ENCODE measurements at regions of chr13 and their contacts with region 1.

Region 1: DNA sequence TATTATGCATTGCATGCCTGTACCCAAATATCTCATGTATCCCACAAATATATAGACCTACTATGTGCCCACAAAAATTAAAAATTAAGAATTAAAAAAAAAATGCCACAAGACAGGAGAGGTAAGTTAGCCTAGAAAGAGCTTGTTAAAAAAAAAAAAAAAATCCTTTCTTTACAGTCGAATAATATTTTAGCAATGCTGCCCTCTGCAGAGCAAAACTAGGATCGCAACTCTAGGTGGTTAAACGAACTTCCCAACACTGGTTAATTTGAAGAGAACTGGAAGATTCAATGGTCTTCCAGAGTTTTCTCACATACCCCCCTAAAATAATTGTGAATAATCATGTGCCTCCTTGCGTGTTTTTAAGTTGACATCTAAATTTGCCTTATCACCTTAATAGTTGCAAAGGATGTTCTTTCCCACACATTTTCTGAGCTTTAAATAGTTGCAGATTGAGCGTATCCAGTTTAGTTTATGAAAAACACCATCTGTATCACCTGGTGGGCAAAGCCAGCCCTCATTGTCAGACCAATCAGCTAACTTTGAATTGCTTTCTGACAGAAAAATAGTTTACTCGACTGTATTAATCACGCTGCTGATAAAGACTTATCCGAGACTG is 47.4 kb upstream of the RCBTB2 start:
- DNase-seq: peak; percentile 80
- ATAC-seq: peak; percentile 19; the same call in 1 of the 2 replicates
- H3K4me3 ChIP-seq: no peak overlapping the region
- H3K27ac ChIP-seq: no peak overlapping the region
- H3K4me1 ChIP-seq: peaks cover 19% of the 10 kb centered on the region
- H3K27me3 ChIP-seq: no peaks in the 10 kb centered on the region
- CTCF ChIP-seq: peak; percentile 71

Region 2: GRCh38 chr13:48126944-48127830 is 453.1 kb before region 1 on chr13:
- CTCF ChIA-PET with region 1: no interaction called
- POLR2A ChIA-PET with region 1: no interaction called
- intact Hi-C with region 1: loop called (anchors 2 kb)
- DNase-seq: peak; percentile 66
- ATAC-seq: peak; percentile 73
- H3K4me3 ChIP-seq: no peak overlapping the region
- H3K27ac ChIP-seq: no peak overlapping the region
- H3K4me1 ChIP-seq: no peaks in the 10 kb centered on the region
- H3K27me3 ChIP-seq: no peaks in the 10 kb centered on the region
- CTCF ChIP-seq: peak; percentile 68

Region 3: GRCh38 chr13:48233046-48233907 is 347.0 kb before region 1 on chr13 and contains the start of gene ITM2B:
- CTCF ChIA-PET with region 1: no interaction called
- POLR2A ChIA-PET with region 1: no interaction called
- intact Hi-C with region 1: loop called (anchors 10 kb)
- DNase-seq: peak; percentile 52
- ATAC-seq: peak; percentile 84
- H3K4me3 ChIP-seq: peak within 1 kb of the TSS; percentile 88
- H3K27ac ChIP-seq: peak within 1 kb of the TSS; percentile 32; the same call in 1 of the 2 replicates
- H3K4me1 ChIP-seq: peaks cover 32% of the 10 kb centered on the region
- H3K27me3 ChIP-seq: no peaks in the 10 kb centered on the region
- CTCF ChIP-seq: peak; percentile 45; the same call in 1 of the 2 replicates
- total RNA-seq, gene ITM2B: 74.6 and 105 TPM in 2 replicates

Region 4: GRCh38 chr13:48334534-48335127 is 245.7 kb before region 1 on chr13:
- CTCF ChIA-PET with region 1: interaction called, 31 read pairs
- POLR2A ChIA-PET with region 1: no interaction called
- intact Hi-C with region 1: loop called (anchors 1 kb)
- DNase-seq: peak; percentile 49
- ATAC-seq: peak; percentile 74
- H3K4me3 ChIP-seq: no peak overlapping the region
- H3K27ac ChIP-seq: peak overlapping the region; percentile 53
- H3K4me1 ChIP-seq: peaks cover 18% of the 10 kb centered on the region
- H3K27me3 ChIP-seq: no peaks in the 10 kb centered on the region
- CTCF ChIP-seq: peak; percentile 87

Region 5: DNA sequence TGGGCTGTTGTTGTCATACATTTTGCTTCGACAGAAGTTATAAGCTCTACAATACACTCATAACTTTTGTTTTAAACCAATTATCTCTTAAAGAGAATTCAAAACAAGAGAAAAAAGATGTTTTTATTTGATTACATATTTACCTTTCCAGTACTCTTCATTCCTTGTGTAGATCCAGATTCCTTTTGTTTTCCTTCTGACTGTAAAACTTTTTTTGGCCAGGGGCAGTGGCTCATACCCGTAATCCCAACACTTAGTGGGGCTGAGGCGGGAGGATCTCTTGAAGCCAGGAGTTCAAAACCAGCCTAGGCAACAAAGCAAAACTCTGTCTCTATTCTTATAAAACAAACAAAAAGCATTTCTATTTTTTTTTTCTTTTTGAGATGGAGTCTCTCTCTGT is 189.0 kb before region 1 on chr13:
- CTCF ChIA-PET with region 1: interaction called, 10 read pairs
- POLR2A ChIA-PET with region 1: no interaction called
- intact Hi-C with region 1: no loop called
- DNase-seq: no peak
- ATAC-seq: no peak
- H3K4me3 ChIP-seq: no peak overlapping the region
- H3K27ac ChIP-seq: no peak overlapping the region
- H3K4me1 ChIP-seq: no peaks in the 10 kb centered on the region
- H3K27me3 ChIP-seq: no peaks in the 10 kb centered on the region
- CTCF ChIP-seq: no peak

Region 6: DNA sequence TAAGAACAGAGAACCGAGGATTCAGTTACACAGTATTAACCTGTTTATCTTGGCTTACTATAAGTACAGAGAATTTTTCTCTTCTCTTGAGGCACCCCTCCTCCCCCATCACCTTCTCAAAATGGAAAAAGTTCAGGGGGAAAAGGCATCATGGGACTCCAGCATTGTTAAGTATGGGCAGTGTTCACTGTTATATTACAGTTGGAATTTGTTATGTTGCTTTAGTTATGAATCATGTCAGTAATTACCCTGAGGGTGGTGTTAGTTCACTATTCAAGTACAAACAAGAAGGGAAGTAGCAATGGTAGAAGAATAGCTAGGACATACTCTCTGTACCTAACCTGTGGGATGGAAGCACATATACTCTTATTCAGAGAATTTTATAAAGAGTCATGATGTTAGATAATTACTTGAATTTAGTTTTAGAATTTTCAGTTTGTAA is 179.4 kb before region 1 on chr13:
- CTCF ChIA-PET with region 1: interaction called, 10 read pairs
- POLR2A ChIA-PET with region 1: no interaction called
- intact Hi-C with region 1: loop called (anchors 1 kb)
- DNase-seq: peak; percentile 59
- ATAC-seq: peak; percentile 83
- H3K4me3 ChIP-seq: no peak overlapping the region
- H3K27ac ChIP-seq: peak overlapping the region; percentile 54
- H3K4me1 ChIP-seq: peaks cover 36% of the 10 kb centered on the region
- H3K27me3 ChIP-seq: no peaks in the 10 kb centered on the region
- CTCF ChIP-seq: 0 out of 2 replicates have a peak, but pooled peaks have one; percentile 10

Region 7: DNA sequence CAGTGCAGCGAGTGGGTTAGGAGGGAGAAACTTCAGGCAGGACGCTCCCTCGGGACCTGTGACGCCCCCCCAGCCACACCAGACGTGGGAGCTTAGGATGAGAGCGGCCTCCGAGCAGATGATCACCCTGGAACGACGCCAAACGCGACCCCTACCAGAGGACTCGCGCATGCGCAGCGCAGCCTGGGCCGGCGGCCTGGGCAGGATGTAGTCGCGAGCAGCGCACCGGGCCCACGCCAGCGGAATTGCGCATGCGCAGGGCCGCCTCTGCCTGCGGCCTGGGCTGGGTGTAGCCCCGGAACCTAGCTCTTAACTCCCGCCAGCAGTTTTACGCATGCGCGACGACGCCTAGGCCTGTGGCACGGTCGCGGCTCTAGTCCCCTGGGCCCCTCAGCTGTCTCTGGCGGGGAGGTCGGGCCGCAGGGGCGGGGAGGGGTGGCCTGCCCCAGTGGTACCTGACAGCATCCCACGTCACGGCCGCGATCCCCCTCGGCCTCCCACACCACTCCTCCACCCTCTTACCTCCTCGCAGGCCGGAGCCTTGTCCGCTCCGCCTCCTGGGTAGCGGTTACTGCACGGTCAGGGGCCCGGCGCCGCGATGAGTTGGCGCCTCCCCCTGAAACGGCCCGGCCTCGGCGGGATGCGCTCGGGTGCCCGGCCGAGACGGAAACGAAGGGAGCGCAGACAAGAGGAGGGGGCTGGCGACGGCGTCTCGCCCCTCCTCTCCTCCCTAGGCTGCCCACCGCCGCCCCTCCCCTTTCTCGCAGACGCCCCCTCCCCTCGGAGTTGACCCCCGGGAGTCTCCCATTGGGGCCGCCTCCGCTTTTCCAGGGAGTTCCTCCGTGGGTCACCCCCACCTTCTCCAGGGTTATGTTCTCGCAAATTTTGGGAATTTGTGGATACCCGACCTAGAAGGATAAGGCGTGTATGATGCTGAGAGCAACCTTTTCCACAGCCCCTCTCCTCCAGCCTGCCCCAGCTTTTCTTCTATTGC is 47.5 kb before region 1 on chr13 and contains the start of gene RCBTB2:
- CTCF ChIA-PET with region 1: interaction called, 4 read pairs
- POLR2A ChIA-PET with region 1: interaction called, 7 read pairs
- intact Hi-C with region 1: loop called (anchors 2 kb)
- DNase-seq: peak; percentile 95
- ATAC-seq: peak; percentile 90
- H3K4me3 ChIP-seq: peak within 1 kb of the TSS; percentile 88
- H3K27ac ChIP-seq: peak within 1 kb of the TSS; percentile 54
- H3K4me1 ChIP-seq: peaks cover 7% of the 10 kb centered on the region; the same call in 1 of the 2 replicates
- H3K27me3 ChIP-seq: no peaks in the 10 kb centered on the region
- CTCF ChIP-seq: no peak
- total RNA-seq, gene RCBTB2: 2.1 and 2.5 TPM in 2 replicates

Region 8: DNA sequence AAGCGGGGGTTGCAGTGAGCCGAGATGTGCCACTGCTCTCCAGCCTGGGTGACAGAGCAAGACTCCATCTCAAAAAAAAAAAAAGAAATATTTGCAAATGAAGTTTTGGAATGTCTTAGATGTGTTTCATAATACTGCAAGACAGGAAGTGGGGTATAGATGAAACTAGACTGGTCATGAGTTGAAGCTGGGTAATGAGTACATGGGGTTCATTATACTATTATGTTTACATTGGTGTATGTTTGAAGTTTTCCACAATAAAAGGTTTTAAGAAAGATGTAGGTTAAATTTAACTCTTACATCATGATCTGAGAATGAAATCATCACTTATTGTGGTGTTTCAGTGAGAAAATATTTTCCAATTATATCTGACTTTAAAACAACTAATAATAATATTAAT is 414.4 kb after region 1 on chr13:
- CTCF ChIA-PET with region 1: no interaction called
- POLR2A ChIA-PET with region 1: no interaction called
- intact Hi-C with region 1: no loop called
- DNase-seq: no peak
- ATAC-seq: no peak
- H3K4me3 ChIP-seq: no peak overlapping the region
- H3K27ac ChIP-seq: no peak overlapping the region
- H3K4me1 ChIP-seq: no peaks in the 10 kb centered on the region
- H3K27me3 ChIP-seq: no peaks in the 10 kb centered on the region
- CTCF ChIP-seq: no peak

Measured in PC-3 (cell line).